Activated CD8-positive, alpha-beta memory T cell treated with anti-CD3 and anti-CD28 coated beads, Interleukin-2, amount 10 ng/mL, durations not matched to agents 7 days and 5 days (primary cell): ENCODE measurements at regions of chr17 and their contacts with region 1.

Region 1: DNA sequence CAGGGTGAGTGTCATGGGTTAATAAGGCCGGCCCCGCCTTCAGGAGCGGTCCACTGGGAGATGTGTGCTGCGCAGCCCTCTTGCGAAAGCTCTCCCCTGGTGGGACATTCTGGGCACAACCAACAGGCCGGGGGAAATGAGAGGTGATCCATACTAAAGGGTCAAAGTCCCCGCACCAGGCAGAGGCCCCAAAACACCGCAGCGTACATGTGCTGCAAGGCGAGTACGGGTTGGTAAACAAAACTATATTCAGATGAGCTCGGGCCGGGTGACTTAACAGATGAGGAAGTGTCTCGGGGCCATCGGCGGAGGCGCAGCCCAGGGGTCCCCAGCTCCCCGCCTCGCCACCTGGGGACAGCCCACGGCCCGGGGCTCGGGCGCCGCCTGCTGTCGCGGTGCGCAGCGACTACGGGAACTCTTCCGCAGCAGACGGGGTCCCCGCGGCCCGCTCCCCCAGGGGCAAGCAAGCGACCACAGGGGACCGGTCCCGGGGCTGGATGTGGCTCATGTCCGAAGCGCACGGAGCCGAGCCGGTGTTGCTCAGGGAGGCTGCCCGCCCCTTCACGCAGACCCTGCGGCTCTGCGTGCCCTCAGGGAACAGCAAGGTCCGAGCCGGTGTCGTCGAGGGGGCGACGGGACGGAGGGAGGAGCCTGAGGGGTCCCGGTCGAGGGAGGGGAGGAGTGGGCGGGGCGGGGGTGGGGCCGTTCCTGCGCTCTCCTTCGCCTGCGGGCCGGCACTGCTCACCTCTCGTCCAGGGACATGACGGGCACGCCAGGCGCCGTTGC is at the start of gene RAB37:
- DNase-seq: peak; percentile 67
- ATAC-seq: peak; percentile 37
- H3K4me3 Mint-ChIP-seq: peak within 1 kb of the TSS; percentile 87
- H3K27ac Mint-ChIP-seq: peak within 1 kb of the TSS; percentile 91
- H3K4me1 Mint-ChIP-seq: peaks cover 47% of the 10 kb centered on the region
- H3K27me3 Mint-ChIP-seq: peaks cover 17% of the 10 kb centered on the region
- total RNA-seq, gene RAB37: 36.7 to 51.7 TPM

Region 2: DNA sequence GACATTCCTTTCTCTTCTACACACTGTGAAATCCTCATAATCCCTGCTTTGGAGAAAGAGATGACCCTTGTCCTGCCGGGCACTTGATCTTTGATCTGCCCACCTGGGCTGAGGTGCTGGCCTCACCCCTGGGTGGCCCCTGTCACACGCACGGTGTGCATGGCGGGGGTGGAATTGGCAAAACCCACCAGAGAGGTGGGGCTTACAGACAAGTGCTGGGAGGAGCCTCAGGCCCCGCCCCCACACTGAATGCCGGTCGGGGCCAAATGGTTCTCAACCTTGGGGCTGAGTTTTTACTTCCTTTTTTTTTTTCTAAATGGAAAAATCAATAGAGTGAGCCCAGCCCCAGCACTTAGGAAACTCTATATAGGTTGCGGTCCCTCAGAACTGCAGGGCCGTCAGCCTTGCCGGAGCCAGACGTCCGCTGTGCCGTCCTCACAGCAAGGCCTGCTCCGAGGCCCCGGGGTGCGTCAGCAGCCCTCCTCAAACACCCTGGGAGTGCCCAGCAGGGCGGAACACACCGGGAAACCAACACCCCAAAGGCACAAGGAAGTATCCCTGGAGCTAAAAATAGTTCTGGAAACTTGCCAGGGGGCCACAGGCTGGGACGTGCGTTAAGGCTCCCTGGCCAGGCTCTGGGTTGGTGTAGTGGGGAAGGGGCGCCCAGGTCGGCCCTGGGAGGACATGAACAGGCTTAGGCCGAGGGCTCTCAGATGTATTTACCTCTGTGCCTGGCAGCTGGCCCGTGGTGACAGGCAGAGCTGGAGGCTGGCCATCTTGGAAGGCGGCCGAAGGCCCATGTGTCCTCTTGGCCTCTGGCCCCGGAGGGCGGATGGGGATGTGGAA is 293.8 kb before region 1 on chr17:
- CTCF ChIA-PET with region 1: no interaction called
- DNase-seq: no peak
- ATAC-seq: no peak
- H3K4me3 Mint-ChIP-seq: no peak overlapping the region
- H3K27ac Mint-ChIP-seq: no peak overlapping the region
- H3K4me1 Mint-ChIP-seq: peaks cover 4% of the 10 kb centered on the region
- H3K27me3 Mint-ChIP-seq: peaks cover 12% of the 10 kb centered on the region

Region 3: DNA sequence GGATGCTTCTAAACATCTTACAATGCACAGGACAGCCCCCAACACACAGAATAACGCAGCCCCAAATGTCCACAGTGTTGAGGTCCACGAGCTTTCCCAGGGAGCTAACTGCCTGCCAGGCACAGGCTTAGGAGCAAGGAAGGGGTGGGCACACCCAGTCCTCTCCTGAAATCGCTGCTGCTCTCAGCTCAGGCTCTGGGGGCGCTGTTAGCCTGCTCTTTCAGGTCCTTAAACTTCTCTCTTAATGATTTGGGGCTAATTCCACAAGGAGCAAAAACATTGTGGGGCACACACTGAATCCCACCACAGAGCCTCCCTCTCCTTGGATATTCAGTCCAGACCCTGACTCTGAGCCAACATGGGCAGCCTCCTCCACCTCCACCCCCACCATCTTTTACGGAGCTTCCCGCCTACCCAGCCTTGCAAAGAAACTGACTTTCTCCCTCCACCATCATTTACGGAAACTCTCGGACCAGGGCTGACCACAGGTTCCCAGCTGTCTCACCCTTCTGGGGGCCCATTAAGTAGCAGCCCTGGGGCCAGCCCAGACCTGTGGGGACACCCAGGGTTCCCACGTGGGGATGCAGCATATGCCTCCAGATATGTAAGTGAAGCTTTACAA is 170.5 kb before region 1 on chr17:
- CTCF ChIA-PET with region 1: interaction called, 13 read pairs
- DNase-seq: peak; percentile 53
- ATAC-seq: peak; percentile 45
- H3K4me3 Mint-ChIP-seq: no peak overlapping the region
- H3K27ac Mint-ChIP-seq: no peak overlapping the region
- H3K4me1 Mint-ChIP-seq: peaks cover 10% of the 10 kb centered on the region
- H3K27me3 Mint-ChIP-seq: peaks cover 43% of the 10 kb centered on the region

Region 4: DNA sequence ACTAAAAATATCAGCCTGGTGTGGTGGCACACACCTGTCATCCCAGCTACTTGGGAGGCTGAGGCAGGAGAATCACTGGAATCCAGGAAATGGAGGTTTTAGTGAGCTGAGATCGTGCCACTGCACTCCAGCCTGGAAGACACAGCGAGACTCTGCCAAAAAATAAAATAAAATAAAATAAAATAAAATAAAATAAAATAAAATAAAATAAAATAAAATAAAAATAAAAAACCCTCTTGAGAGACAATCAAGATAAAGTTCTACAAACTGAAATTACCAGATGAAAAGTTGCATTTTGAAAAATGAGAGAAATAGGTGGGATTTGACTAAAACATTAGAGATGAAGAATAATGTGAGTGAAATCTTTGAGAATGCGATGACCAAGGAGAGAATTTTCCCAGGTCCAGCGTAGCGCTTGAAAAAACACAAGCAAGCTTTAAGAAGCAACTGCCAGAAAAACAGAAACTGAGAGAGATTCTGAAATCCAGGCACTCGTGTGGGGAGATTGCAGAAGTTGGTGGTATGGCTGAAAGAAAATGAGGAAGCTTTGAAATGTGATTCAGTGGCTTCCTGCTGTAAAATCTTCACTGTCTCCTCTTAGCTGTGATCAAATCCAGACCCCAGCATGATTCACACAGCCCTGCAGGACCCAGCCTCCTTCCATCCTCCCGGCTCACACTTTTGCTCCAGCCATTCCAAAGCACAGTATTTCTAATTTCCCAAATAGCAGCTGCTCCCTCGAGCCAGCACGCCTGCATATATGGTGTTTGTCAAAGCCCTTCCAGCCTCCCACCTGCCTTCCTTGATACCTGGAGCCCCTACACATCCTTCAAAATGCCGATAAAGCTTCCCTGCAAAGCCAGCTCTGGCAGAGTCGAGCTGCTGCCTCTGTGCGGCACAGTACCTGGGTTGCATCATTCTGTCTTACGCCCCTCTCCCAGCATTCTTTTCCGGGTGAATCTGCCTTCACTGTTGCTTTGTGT is 104.9 kb before region 1 on chr17:
- CTCF ChIA-PET with region 1: no interaction called
- DNase-seq: no peak
- ATAC-seq: no peak
- H3K4me3 Mint-ChIP-seq: no peak overlapping the region
- H3K27ac Mint-ChIP-seq: no peak overlapping the region
- H3K4me1 Mint-ChIP-seq: peaks cover 8% of the 10 kb centered on the region
- H3K27me3 Mint-ChIP-seq: peaks cover 55% of the 10 kb centered on the region

Region 5: GRCh38 chr17:74723891-74724290 is 12.8 kb before region 1 on chr17:
- CTCF ChIA-PET with region 1: interaction called, 32 read pairs
- DNase-seq: no peak
- ATAC-seq: no peak
- H3K4me3 Mint-ChIP-seq: no peak overlapping the region
- H3K27ac Mint-ChIP-seq: no peak overlapping the region
- H3K4me1 Mint-ChIP-seq: peaks cover 13% of the 10 kb centered on the region
- H3K27me3 Mint-ChIP-seq: peaks cover 39% of the 10 kb centered on the region

Region 6: GRCh38 chr17:74770498-74771318 is 34.0 kb after region 1 on chr17:
- CTCF ChIA-PET with region 1: interaction called, 68 read pairs
- DNase-seq: peak; percentile 81
- ATAC-seq: peak; percentile 78
- H3K4me3 Mint-ChIP-seq: no peak overlapping the region
- H3K27ac Mint-ChIP-seq: peak overlapping the region; percentile 67
- H3K4me1 Mint-ChIP-seq: peaks cover 28% of the 10 kb centered on the region
- H3K27me3 Mint-ChIP-seq: no peaks in the 10 kb centered on the region

Region 7: GRCh38 chr17:74864866-74865395 is 128.2 kb after region 1 on chr17:
- CTCF ChIA-PET with region 1: interaction called, 16 read pairs
- DNase-seq: peak; percentile 78
- ATAC-seq: peak; percentile 60
- H3K4me3 Mint-ChIP-seq: no peak overlapping the region
- H3K27ac Mint-ChIP-seq: no peak overlapping the region
- H3K4me1 Mint-ChIP-seq: peaks cover 12% of the 10 kb centered on the region
- H3K27me3 Mint-ChIP-seq: peaks cover 20% of the 10 kb centered on the region